CD4-positive, alpha-beta memory T cell (primary cell): ENCODE measurements at regions of chr17 and their contacts with region 1.

Region 1: DNA sequence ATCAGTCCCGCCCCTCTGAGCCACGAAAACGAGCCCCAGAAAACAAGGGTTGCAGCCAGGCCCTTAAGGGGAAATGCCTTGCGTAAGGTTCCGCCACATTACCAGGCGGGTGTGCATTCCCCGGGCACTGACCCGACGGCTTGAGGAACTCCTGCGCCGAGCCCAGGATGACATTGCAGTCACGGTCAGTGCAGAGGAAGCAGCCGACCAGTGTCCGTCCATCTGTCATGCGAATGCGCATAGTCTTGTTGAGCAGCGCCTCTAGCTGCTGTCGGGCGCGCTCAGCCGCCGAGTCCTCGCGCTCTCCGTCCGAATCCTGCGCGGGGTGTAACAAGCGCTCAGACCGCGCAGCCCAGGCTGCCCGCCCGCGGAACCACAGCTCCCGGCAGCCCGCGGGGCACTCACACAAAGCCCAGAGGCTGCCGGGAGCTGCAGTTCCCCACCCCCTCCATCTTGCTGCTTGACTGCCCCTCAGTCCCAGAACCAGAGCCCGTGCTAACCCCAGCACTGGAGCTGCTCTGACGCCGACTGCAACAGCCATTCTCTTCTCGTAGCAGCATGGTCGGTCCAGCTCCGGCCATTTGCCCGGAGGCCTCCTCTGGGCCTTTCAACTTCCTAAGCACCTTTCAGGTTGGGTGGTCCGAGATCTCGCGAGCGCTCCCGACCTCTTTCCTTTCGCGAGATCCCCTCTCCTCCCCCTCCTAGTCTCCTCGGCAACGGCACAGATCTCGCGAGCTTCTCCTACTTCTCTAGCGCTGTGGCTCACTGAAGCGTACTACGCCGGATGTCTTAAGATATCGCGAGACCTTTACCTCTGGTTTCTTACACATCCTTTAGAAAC is at the start of gene NAA38:
- DNase-seq: peak; percentile 97 to 99 (median 98)
- H3K4me3 ChIP-seq: peak within 1 kb of the TSS; percentile 67 to 96
- H3K4me3 Mint-ChIP-seq: no peak within 1 kb of the TSS
- H3K27ac ChIP-seq: peak within 1 kb of the TSS; percentile 81
- H3K27ac Mint-ChIP-seq: no peak within 1 kb of the TSS
- H3K4me1 ChIP-seq: peaks cover 32% of the 10 kb centered on the region
- H3K4me1 Mint-ChIP-seq: peaks cover under 1 to 11% (median 7%) of the 10 kb centered on the region in 4 donors
- H3K27me3 ChIP-seq: no peaks in the 10 kb centered on the region
- H3K27me3 Mint-ChIP-seq: no peaks in the 10 kb centered on the region
- total RNA-seq, gene NAA38: 23.1 to 25.8 TPM

Region 2: DNA sequence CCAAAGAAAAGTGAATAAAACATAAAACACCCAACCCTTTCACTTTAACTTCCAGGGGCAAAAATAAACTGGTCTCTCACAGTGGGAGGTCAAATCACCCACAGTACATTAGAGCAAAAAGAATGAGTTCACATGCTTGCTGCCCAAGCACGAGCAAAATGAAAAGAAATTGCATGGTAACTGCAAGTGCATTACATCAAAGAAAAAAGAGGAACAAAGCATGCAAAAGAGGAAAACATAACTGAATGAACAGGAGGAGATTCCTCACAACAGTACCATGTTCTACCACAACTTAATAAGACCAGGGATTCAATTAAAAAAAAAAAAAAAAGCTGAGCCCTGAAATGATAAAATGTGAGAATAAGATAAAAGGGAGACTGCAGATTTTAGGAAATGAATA is 127.3 kb before region 1 on chr17:
- CTCF ChIA-PET with region 1: no interaction called
- POLR2A ChIA-PET with region 1: no interaction called
- intact Hi-C with region 1: no loop called
- DNase-seq: no peak
- H3K4me3 ChIP-seq: no peak overlapping the region
- H3K4me3 Mint-ChIP-seq: no peak overlapping the region
- H3K27ac ChIP-seq: no peak overlapping the region
- H3K27ac Mint-ChIP-seq: no peak overlapping the region
- H3K4me1 ChIP-seq: no peaks in the 10 kb centered on the region
- H3K4me1 Mint-ChIP-seq: no peaks in the 10 kb centered on the region
- H3K27me3 ChIP-seq: no peaks in the 10 kb centered on the region
- H3K27me3 Mint-ChIP-seq: peaks cover 10 to 24% of the 10 kb centered on the region in 2 donors

Region 3: GRCh38 chr17:7803981-7804380 is 53.1 kb before region 1 on chr17:
- CTCF ChIA-PET with region 1: no interaction called
- POLR2A ChIA-PET with region 1: no interaction called
- intact Hi-C with region 1: no loop called
- DNase-seq: no peak
- H3K4me3 ChIP-seq: no peak overlapping the region
- H3K4me3 Mint-ChIP-seq: no peak overlapping the region
- H3K27ac ChIP-seq: no peak overlapping the region
- H3K27ac Mint-ChIP-seq: no peak overlapping the region
- H3K4me1 ChIP-seq: no peaks in the 10 kb centered on the region
- H3K4me1 Mint-ChIP-seq: no peaks in the 10 kb centered on the region
- H3K27me3 ChIP-seq: no peaks in the 10 kb centered on the region
- H3K27me3 Mint-ChIP-seq: peaks cover 11 to 22% of the 10 kb centered on the region in 2 donors

Region 4: GRCh38 chr17:7844292-7845154 is 12.6 kb before region 1 on chr17:
- CTCF ChIA-PET with region 1: interaction called, 3 read pairs
- POLR2A ChIA-PET with region 1: interaction called, 45 read pairs
- intact Hi-C with region 1: loop called (anchors 1 kb)
- DNase-seq: peak; percentile 82 to 87 (median 85)
- H3K4me3 ChIP-seq: peak overlapping the region; percentile 57 to 92
- H3K4me3 Mint-ChIP-seq: peak overlapping the region; percentile 92 to 99 (median 97)
- H3K27ac ChIP-seq: peak overlapping the region; percentile 99
- H3K27ac Mint-ChIP-seq: peak overlapping the region; percentile 99 to 100 (median 100)
- H3K4me1 ChIP-seq: peaks cover 30% of the 10 kb centered on the region
- H3K4me1 Mint-ChIP-seq: peaks cover 21 to 50% (median 35%) of the 10 kb centered on the region in 4 donors
- H3K27me3 ChIP-seq: no peaks in the 10 kb centered on the region
- H3K27me3 Mint-ChIP-seq: peaks cover 0 to 3% of the 10 kb centered on the region in 2 donors

Region 5: GRCh38 chr17:7867881-7868329 is 10.8 kb after region 1 on chr17:
- CTCF ChIA-PET with region 1: interaction called, 13 read pairs
- POLR2A ChIA-PET with region 1: interaction called, 12 read pairs
- intact Hi-C with region 1: no loop called
- DNase-seq: peak in 1 of 5 donors; percentile 36
- H3K4me3 ChIP-seq: peak overlapping the region in 1 of 2 donors; percentile 29
- H3K4me3 Mint-ChIP-seq: peak overlapping the region; percentile 50 to 84 (median 72)
- H3K27ac ChIP-seq: peak overlapping the region; percentile 39
- H3K27ac Mint-ChIP-seq: peak overlapping the region; percentile 59 to 90 (median 89)
- H3K4me1 ChIP-seq: peaks cover 30% of the 10 kb centered on the region
- H3K4me1 Mint-ChIP-seq: peaks cover 27 to 41% (median 34%) of the 10 kb centered on the region in 4 donors
- H3K27me3 ChIP-seq: no peaks in the 10 kb centered on the region
- H3K27me3 Mint-ChIP-seq: no peaks in the 10 kb centered on the region

Region 6: GRCh38 chr17:7887482-7888183 is 30.5 kb after region 1 on chr17:
- CTCF ChIA-PET with region 1: interaction called, 13 read pairs
- POLR2A ChIA-PET with region 1: interaction called, 13 read pairs
- intact Hi-C with region 1: loop called (anchors 1 kb)
- DNase-seq: peak; percentile 89 to 95 (median 92)
- H3K4me3 ChIP-seq: peak overlapping the region; percentile 86 to 96
- H3K4me3 Mint-ChIP-seq: no peak overlapping the region
- H3K27ac ChIP-seq: peak overlapping the region; percentile 65
- H3K27ac Mint-ChIP-seq: no peak overlapping the region
- H3K4me1 ChIP-seq: peaks cover 46% of the 10 kb centered on the region
- H3K4me1 Mint-ChIP-seq: peaks cover 10 to 16% (median 12%) of the 10 kb centered on the region in 4 donors
- H3K27me3 ChIP-seq: no peaks in the 10 kb centered on the region
- H3K27me3 Mint-ChIP-seq: no peaks in the 10 kb centered on the region